ENCODE measurements at regions of chr2 and their contacts with region 1.

Region 1: GRCh38 chr2:218406209-218406948 is 6.7 kb downstream of the CTDSP1 start:
- DNase-seq: peak; percentile 97
- H3K4me3 Mint-ChIP-seq: peak overlapping the region; percentile 85
- H3K27ac Mint-ChIP-seq: peak overlapping the region; percentile 86
- H3K4me1 Mint-ChIP-seq: peaks cover 45% of the 10 kb centered on the region
- H3K27me3 Mint-ChIP-seq: no peaks in the 10 kb centered on the region

Region 2: GRCh38 chr2:218466016-218466521 is 59.7 kb after region 1 on chr2:
- intact Hi-C with region 1: loop called (anchors 5 kb)
- DNase-seq: no peak
- H3K4me3 Mint-ChIP-seq: no peak overlapping the region
- H3K27ac Mint-ChIP-seq: no peak overlapping the region
- H3K4me1 Mint-ChIP-seq: peaks cover 9% of the 10 kb centered on the region
- H3K27me3 Mint-ChIP-seq: no peaks in the 10 kb centered on the region

Region 3: DNA sequence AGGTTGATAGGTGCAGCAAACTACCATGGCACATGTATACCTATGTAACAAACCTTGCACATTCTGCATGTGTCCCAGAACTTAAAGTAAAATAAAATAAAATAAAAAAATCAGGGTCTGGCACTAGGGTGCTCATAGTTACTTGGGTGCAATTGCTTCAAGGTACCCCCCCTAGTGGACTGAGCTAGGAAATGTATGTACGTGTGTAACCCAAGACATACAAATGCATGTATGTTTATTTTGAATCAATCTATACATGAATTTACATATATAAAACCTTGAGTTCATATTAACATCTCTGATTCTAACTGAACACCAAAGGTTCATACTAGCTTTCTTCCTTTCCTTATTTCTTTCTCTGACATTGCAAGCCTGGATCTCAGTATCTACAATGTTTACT is 110.2 kb after region 1 on chr2:
- intact Hi-C with region 1: loop called (anchors 5 kb)
- DNase-seq: peak; percentile 64
- H3K4me3 Mint-ChIP-seq: no peak overlapping the region
- H3K27ac Mint-ChIP-seq: no peak overlapping the region
- H3K4me1 Mint-ChIP-seq: peaks cover 32% of the 10 kb centered on the region
- H3K27me3 Mint-ChIP-seq: no peaks in the 10 kb centered on the region

Region 4: GRCh38 chr2:218659258-218659987 is 253.0 kb after region 1 on chr2 and contains the starts of genes BCS1L and ZNF142:
- intact Hi-C with region 1: loop called (anchors 1 kb)
- DNase-seq: peak; percentile 98
- H3K4me3 Mint-ChIP-seq: peak within 1 kb of the TSS; percentile 98
- H3K27ac Mint-ChIP-seq: peak within 1 kb of the TSS; percentile 95
- H3K4me1 Mint-ChIP-seq: peaks cover 31% of the 10 kb centered on the region
- H3K27me3 Mint-ChIP-seq: no peaks in the 10 kb centered on the region
- total RNA-seq, gene BCS1L: 92.9 and 94.4 TPM in 2 replicates
- total RNA-seq, gene ZNF142: 59.6 and 60.9 TPM in 2 replicates

Region 5: GRCh38 chr2:219278655-219279516 is 872.5 kb after region 1 on chr2 and contains the start of gene DNAJB2:
- intact Hi-C with region 1: no loop called
- DNase-seq: peak; percentile 100
- H3K4me3 Mint-ChIP-seq: peak within 1 kb of the TSS; percentile 97
- H3K27ac Mint-ChIP-seq: peak within 1 kb of the TSS; percentile 96
- H3K4me1 Mint-ChIP-seq: peaks cover 42% of the 10 kb centered on the region
- H3K27me3 Mint-ChIP-seq: no peaks in the 10 kb centered on the region
- total RNA-seq, gene DNAJB2: 49.7 and 52.4 TPM in 2 replicates